ENCODE measurements at regions of chr19 and their contacts with region 1.

Region 1: GRCh38 chr19:57819475-57820148 is 4.9 kb upstream of the ZNF552 start:
- DNase-seq: peak; percentile 60
- ATAC-seq: peak; percentile 84
- H3K4me3 Mint-ChIP-seq: peak overlapping the region; percentile 98
- H3K27ac Mint-ChIP-seq: peak overlapping the region; percentile 97
- H3K4me1 Mint-ChIP-seq: peaks cover 55% of the 10 kb centered on the region
- H3K27me3 Mint-ChIP-seq: no peaks in the 10 kb centered on the region
- CTCF ChIP-seq: no peak

Region 2: GRCh38 chr19:57708641-57709361 is 110.8 kb before region 1 on chr19 and contains the start of gene ZNF154:
- CTCF ChIA-PET with region 1: no interaction called
- POLR2A ChIA-PET with region 1: interaction called, 21 read pairs
- intact Hi-C with region 1: no loop called
- DNase-seq: peak; percentile 56
- ATAC-seq: peak; percentile 93
- H3K4me3 Mint-ChIP-seq: peak within 1 kb of the TSS; percentile 93
- H3K27ac Mint-ChIP-seq: peak within 1 kb of the TSS; percentile 93
- H3K4me1 Mint-ChIP-seq: peaks cover 46% of the 10 kb centered on the region
- H3K27me3 Mint-ChIP-seq: no peaks in the 10 kb centered on the region
- CTCF ChIP-seq: no peak
- total RNA-seq, gene ZNF154: 23.2 and 27.9 TPM in 2 replicates

Region 3: DNA sequence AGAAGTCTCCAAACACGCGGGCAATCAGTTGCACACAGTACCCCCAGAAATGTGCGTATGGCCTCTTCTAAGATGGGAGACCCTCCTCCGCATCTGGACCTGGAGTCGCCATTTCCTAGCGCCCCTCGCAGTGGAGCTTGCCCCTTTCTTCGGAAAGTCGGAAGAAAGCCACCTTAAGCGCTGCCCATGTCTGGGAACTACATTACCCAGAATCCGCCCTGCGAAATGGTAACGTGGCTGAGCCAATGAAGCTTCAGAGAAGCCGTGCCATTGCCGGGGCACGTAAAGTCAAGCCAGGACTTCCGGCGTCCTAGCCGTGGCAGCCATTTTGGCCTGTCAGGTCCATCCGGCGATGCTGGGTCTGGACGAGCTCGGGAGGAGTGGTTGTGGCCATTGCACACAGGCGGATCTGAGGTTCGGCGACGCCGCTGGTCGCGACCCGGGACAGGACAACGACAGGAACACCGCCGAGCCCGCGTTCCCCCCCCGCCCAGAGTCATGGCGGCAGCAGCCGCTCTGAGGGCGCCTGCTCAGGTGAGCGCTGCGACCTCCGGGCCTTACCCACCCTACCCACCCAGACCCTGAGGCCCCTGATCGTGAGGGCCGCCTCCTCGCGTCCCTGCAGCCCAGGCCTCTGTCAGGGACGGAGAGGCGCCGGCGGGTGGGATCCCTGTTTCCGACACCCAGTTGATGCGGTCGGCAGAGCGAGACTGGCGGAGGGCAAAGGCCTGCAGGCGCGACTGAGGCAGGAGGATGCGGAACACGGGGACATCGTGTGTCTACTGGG is 50.1 kb before region 1 on chr19 and contains the start of gene ZNF586:
- CTCF ChIA-PET with region 1: no interaction called
- POLR2A ChIA-PET with region 1: interaction called, 7 read pairs
- intact Hi-C with region 1: loop called (anchors 1 kb)
- DNase-seq: peak; percentile 76
- ATAC-seq: peak; percentile 98
- H3K4me3 Mint-ChIP-seq: peak within 1 kb of the TSS; percentile 95
- H3K27ac Mint-ChIP-seq: peak within 1 kb of the TSS; percentile 86
- H3K4me1 Mint-ChIP-seq: peaks cover 54% of the 10 kb centered on the region
- H3K27me3 Mint-ChIP-seq: no peaks in the 10 kb centered on the region
- CTCF ChIP-seq: no peak
- total RNA-seq, gene ZNF586: 29.4 and 33.7 TPM in 2 replicates

Region 4: GRCh38 chr19:57850553-57851017 is 31.0 kb after region 1 on chr19:
- CTCF ChIA-PET with region 1: no interaction called
- POLR2A ChIA-PET with region 1: interaction called, 12 read pairs
- intact Hi-C with region 1: no loop called
- DNase-seq: no peak
- ATAC-seq: no peak
- H3K4me3 Mint-ChIP-seq: peak overlapping the region; percentile 95
- H3K27ac Mint-ChIP-seq: peak overlapping the region; percentile 93
- H3K4me1 Mint-ChIP-seq: peaks cover 24% of the 10 kb centered on the region
- H3K27me3 Mint-ChIP-seq: no peaks in the 10 kb centered on the region
- CTCF ChIP-seq: no peak

Region 5: DNA sequence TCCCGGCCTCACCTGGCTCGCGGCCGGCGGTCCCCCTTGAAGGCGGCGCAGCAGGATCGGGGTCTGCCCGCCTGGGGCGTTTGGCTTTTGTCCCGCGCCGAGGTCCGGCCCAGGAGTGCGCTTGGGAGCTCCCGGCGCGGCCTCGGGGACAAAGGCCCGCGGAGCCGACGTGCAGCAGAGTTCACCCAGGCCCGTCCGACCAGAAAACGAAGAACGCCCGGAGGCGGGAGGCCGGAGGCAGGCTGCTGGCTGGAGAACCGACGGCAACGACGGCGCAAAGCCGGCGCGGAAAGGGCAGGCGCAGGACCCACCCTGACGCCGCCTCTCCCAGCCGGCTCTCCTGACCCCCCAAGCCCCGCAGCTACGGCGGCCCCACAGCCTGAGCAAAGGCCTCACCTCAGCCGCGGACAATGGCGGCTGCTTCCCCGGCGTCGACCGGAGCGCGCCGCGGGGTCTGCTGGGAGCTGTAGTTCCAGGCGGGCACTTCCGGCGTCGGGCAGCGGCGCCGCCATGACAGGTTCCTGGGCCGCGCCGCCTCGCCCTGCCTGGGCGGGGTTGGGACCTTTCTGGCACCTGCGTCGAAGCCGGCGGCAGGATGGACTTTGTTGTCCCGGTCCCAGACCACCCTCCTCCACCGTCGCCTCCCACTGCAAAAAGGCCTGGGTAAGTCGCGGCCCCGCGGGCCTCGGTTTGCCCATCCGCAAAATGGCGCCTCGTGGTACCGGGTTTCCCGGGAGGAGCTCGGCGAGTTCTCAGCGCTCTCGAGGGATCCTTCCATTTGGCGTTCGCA is 183.0 kb after region 1 on chr19 and contains the start of gene ZNF606:
- CTCF ChIA-PET with region 1: no interaction called
- POLR2A ChIA-PET with region 1: interaction called, 8 read pairs
- intact Hi-C with region 1: loop called (anchors 1 kb)
- DNase-seq: peak; percentile 87
- ATAC-seq: peak; percentile 97
- H3K4me3 Mint-ChIP-seq: peak within 1 kb of the TSS; percentile 88
- H3K27ac Mint-ChIP-seq: peak within 1 kb of the TSS; percentile 87
- H3K4me1 Mint-ChIP-seq: peaks cover 38% of the 10 kb centered on the region
- H3K27me3 Mint-ChIP-seq: no peaks in the 10 kb centered on the region
- CTCF ChIP-seq: no peak
- total RNA-seq, gene ZNF606: 27.8 and 32.9 TPM in 2 replicates

Measured in activated B cell treated with CpG ODN at 0.5 μM for 24 hours (primary cell).